ENCODE measurements at regions of chr3 and their contacts with region 1.

Region 1: GRCh38 chr3:71461749-71462465 is 121.6 kb downstream of the FOXP1 start:
- DNase-seq: no peak
- ATAC-seq: no peak
- H3K4me3 ChIP-seq: no peak overlapping the region
- H3K4me3 Mint-ChIP-seq: peak overlapping the region; percentile 49
- H3K27ac ChIP-seq: peak overlapping the region in 1 of 2 donors; percentile 2
- H3K27ac Mint-ChIP-seq: peak overlapping the region; percentile 94
- H3K4me1 ChIP-seq: peaks cover 35% of the 10 kb centered on the region
- H3K4me1 Mint-ChIP-seq: peaks cover 87% of the 10 kb centered on the region
- H3K27me3 ChIP-seq: no peaks in the 10 kb centered on the region
- H3K27me3 Mint-ChIP-seq: no peaks in the 10 kb centered on the region
- CTCF ChIP-seq: no peak

Region 2: GRCh38 chr3:71504250-71505036 is 42.5 kb after region 1 on chr3:
- CTCF ChIA-PET with region 1: no interaction called
- POLR2A ChIA-PET with region 1: no interaction called
- intact Hi-C with region 1: loop called in 1 of 2 experiments (anchors 5 kb)
- DNase-seq: peak in 4 of 14 experiments; percentile 34 to 67 (median 56)
- ATAC-seq: peak; percentile 41
- H3K4me3 ChIP-seq: no peak overlapping the region
- H3K4me3 Mint-ChIP-seq: no peak overlapping the region
- H3K27ac ChIP-seq: no peak overlapping the region
- H3K27ac Mint-ChIP-seq: peak overlapping the region; percentile 73
- H3K4me1 ChIP-seq: peaks cover 16% of the 10 kb centered on the region
- H3K4me1 Mint-ChIP-seq: peaks cover 76% of the 10 kb centered on the region
- H3K27me3 ChIP-seq: no peaks in the 10 kb centered on the region
- H3K27me3 Mint-ChIP-seq: no peaks in the 10 kb centered on the region
- CTCF ChIP-seq: no peak